Ovary (tissue), 10 donors: ENCODE measurements at regions of chr2 and their contacts with region 1.

Region 1: GRCh38 chr2:33839791-33840190 is 240.7 kb upstream of the FAM98A start:
- DNase-seq: no peak
- H3K4me3 ChIP-seq: no peak overlapping the region
- H3K27ac ChIP-seq: no peak overlapping the region
- H3K4me1 ChIP-seq: no peaks in the 10 kb centered on the region
- H3K27me3 ChIP-seq: no peaks in the 10 kb centered on the region
- CTCF ChIP-seq: no peak
- EP300 ChIP-seq: no peak
- POLR2A ChIP-seq: no peak

Region 2: DNA sequence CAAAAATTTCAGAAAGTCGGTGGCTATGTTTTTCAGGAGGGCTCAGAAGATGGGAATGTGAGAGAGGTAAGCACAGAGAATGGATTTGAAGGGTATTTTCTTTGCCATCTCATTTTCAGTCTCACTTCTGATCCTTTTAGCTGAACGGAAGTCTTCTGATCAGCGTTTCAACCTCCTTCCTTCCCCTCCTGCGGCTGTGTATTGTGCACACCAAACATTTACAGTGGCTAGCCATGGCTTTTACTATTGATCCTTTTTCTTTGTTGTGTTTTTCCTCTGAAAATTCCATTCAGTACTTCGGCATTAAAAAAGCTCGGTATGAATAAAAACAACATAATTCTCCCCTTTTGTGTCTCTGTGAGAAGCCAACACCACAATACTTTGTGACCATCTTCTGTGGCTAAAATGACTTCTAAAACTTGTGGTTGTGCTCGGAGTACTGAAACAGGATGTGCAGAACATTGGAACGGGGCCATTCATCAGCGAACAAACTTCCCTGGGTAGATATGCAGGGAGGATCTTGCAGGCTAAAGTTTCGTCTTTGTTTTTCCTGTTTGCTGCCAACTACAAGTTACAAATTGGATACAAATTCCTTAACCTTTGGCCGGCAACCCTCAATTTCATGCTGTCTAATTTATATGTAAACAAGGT is 20.1 kb after region 1 on chr2:
- intact Hi-C with region 1: loop called in 1 of 4 experiments (anchors 1 kb)
- DNase-seq: peak; percentile 27 to 44 (median 33)
- H3K4me3 ChIP-seq: no peak overlapping the region
- H3K27ac ChIP-seq: no peak overlapping the region
- H3K4me1 ChIP-seq: no peaks in the 10 kb centered on the region
- H3K27me3 ChIP-seq: no peaks in the 10 kb centered on the region
- CTCF ChIP-seq: no peak
- EP300 ChIP-seq: no peak
- POLR2A ChIP-seq: no peak

Region 3: DNA sequence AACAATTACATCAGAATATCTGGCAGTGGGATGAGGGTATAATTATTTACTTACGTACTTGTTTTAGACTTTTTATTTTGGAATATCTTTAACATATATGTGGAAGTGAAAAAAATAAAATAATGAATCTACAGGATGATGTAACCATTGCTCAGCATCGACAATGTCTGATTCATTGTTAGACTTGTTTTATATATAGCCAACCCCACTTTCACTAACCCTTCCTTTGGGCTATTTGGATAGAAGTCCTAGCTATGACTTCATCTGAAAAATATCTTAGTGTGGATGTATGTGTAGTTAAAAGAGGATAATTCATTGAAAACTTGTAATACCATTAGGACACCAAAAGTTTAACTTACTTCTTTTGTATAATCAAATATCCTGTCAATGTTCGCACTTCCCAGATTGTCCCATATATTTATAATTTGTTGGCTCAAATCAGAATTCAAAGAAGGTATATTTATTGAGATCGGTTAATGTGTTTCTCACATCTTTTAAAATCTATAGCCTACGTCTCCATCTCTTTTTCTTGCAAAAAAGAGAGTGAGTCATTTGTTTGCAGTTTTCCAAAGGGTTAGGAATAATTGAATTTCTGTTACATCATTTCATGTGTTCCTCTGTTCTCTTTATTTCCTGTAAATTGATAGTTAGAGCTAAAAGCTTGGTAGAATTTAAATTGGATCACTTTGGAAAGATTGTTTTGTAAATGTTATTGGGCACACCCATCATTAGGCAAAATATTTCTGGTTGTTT is 265.4 kb after region 1 on chr2:
- intact Hi-C with region 1: no loop called
- DNase-seq: no peak
- H3K4me3 ChIP-seq: no peak overlapping the region
- H3K27ac ChIP-seq: no peak overlapping the region
- H3K4me1 ChIP-seq: no peaks in the 10 kb centered on the region
- H3K27me3 ChIP-seq: no peaks in the 10 kb centered on the region
- CTCF ChIP-seq: no peak
- EP300 ChIP-seq: no peak
- POLR2A ChIP-seq: no peak